ENCODE measurements at regions of chr19 and their contacts with region 1.

Region 1: DNA sequence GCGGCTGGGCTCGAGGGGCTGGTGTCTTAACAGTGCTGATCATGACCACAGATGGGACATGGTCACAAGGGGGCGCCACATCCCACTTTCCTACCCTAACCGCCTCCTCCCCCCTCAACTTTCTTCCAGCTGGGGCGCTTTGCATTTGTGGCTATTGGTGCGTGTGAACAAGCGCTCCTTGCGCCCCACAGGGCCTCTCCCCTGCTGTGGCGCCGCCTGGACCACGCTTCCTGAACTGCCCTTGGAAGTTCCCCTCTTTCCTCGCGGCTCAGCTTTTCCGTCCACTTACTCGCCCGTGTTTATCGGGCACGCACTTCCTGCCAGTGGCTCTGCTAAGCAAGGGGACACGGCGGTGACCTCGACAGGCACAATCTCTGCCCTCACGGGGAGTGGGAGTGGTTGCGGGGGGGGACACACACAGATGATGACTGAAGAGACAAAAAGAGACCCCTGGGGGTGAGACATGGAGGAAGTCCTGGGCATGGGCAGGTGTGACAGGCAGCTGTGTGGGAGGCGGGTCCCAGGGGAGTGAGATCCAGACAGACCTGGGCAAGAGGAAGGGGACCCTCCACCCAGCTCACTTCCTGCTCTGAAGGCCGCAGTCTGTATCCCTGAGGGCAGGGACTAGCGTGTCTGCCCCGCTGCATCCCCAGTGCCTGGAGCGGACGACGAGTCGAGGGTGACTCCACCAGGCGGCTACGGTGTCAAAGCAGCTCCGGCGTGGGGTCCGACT is 40.3 kb downstream of the ZNF787 start:
- DNase-seq: peak; percentile 91
- CTCF ChIP-seq: peak; percentile 67

Region 2: DNA sequence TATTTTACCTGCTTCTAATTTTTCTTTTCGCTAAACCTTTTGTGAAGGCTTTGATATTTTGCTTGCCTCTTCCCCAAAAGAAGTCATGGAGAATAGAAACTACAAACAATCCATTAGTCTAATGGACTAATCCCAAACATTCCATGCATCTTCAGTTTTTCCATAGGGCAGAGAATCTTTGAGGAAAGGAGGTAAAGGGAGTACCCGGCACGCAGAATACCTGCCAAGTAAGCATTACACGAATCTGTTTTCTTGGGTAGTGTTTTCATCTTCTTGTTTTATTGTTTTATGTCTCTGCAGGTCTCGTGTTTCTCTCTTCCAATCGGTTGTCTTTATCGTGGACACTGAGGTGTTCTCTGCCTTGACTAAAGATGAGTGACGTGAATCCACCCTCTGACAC is 133.3 kb before region 1 on chr19 and contains the start of gene NLRP8:
- CTCF ChIA-PET with region 1: no interaction called
- POLR2A ChIA-PET with region 1: no interaction called
- DNase-seq: no peak
- CTCF ChIP-seq: no peak

Region 3: GRCh38 chr19:56066152-56067023 is 14.4 kb before region 1 on chr19:
- CTCF ChIA-PET with region 1: interaction called, 98 read pairs
- POLR2A ChIA-PET with region 1: no interaction called
- DNase-seq: peak; percentile 84
- CTCF ChIP-seq: peak; percentile 93

Region 4: DNA sequence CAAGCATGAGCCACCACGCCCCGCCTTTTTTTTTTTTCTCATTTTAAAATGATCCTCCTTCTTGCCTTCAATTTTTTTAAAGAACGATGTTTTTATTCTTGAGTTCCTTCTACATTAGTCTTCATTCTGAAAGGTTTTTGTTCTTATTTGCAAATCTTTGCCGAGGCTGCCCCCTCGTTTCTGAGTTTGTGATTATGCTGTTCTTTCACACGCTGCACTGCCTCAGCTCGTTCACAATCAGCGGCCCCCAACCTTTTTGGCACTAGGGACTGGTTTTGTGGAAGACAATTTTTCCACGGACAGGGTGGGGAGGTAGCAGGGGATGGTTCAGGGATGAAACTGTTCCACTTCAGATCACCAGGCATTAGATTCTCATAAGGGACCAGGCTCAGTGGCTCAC is 13.6 kb after region 1 on chr19:
- CTCF ChIA-PET with region 1: interaction called, 12 read pairs
- POLR2A ChIA-PET with region 1: no interaction called
- DNase-seq: no peak
- CTCF ChIP-seq: no peak

Region 5: DNA sequence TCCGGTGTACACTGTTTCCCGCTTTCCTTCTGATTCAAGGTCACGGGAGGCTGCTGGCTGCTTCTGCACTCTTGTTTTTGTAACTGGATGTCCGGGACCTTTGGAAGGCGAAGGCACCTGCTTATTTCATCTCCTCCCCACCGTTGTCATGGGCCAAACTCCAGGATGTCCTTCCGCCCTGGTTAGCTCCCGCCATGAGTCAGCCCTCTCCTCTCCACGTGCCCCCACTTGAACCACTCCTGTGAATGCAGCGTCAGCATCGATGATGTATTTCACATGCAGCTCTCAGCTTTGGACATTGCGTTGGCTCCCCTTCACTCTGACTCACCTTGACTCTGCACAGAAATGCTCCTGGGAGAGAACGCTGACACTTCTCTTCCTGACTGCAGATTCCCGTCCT is 89.4 kb after region 1 on chr19:
- CTCF ChIA-PET with region 1: interaction called, 15 read pairs
- POLR2A ChIA-PET with region 1: no interaction called
- DNase-seq: no peak
- CTCF ChIP-seq: no peak

Region 6: GRCh38 chr19:56350416-56351045 is 269.7 kb after region 1 on chr19:
- CTCF ChIA-PET with region 1: interaction called, 10 read pairs
- POLR2A ChIA-PET with region 1: no interaction called
- DNase-seq: peak; percentile 37
- CTCF ChIP-seq: peak; percentile 82

Region 7: GRCh38 chr19:56900573-56901097 is 819.8 kb after region 1 on chr19:
- CTCF ChIA-PET with region 1: no interaction called
- POLR2A ChIA-PET with region 1: no interaction called
- DNase-seq: no peak
- CTCF ChIP-seq: no peak

Measured in GM10248 (cell line).